Activated CD4-positive, alpha-beta memory T cell treated with anti-CD3 and anti-CD28 coated beads for 36 hours (primary cell): ENCODE measurements at regions of chr17 and their contacts with region 1.

Region 1: GRCh38 chr17:60641810-60642220 is 35.8 kb upstream of the BCAS3 start:
- DNase-seq: peak; percentile 64
- H3K4me3 Mint-ChIP-seq: no peak overlapping the region
- H3K27ac Mint-ChIP-seq: no peak overlapping the region
- H3K4me1 Mint-ChIP-seq: peaks cover 9% of the 10 kb centered on the region
- H3K27me3 Mint-ChIP-seq: no peaks in the 10 kb centered on the region

Region 2: GRCh38 chr17:60142872-60143499 is 498.8 kb before region 1 on chr17:
- CTCF ChIA-PET with region 1: interaction called, 9 read pairs
- POLR2A ChIA-PET with region 1: no interaction called
- intact Hi-C with region 1: loop called (anchors 2 kb)
- DNase-seq: peak; percentile 87
- H3K4me3 Mint-ChIP-seq: peak overlapping the region; percentile 8
- H3K27ac Mint-ChIP-seq: no peak overlapping the region
- H3K4me1 Mint-ChIP-seq: peaks cover 23% of the 10 kb centered on the region
- H3K27me3 Mint-ChIP-seq: peaks cover 85% of the 10 kb centered on the region

Region 3: GRCh38 chr17:60568561-60568960 is 73.3 kb before region 1 on chr17:
- CTCF ChIA-PET with region 1: interaction called, 15 read pairs
- POLR2A ChIA-PET with region 1: no interaction called
- intact Hi-C with region 1: no loop called
- DNase-seq: no peak
- H3K4me3 Mint-ChIP-seq: no peak overlapping the region
- H3K27ac Mint-ChIP-seq: no peak overlapping the region
- H3K4me1 Mint-ChIP-seq: no peaks in the 10 kb centered on the region
- H3K27me3 Mint-ChIP-seq: peaks cover 2% of the 10 kb centered on the region

Region 4: DNA sequence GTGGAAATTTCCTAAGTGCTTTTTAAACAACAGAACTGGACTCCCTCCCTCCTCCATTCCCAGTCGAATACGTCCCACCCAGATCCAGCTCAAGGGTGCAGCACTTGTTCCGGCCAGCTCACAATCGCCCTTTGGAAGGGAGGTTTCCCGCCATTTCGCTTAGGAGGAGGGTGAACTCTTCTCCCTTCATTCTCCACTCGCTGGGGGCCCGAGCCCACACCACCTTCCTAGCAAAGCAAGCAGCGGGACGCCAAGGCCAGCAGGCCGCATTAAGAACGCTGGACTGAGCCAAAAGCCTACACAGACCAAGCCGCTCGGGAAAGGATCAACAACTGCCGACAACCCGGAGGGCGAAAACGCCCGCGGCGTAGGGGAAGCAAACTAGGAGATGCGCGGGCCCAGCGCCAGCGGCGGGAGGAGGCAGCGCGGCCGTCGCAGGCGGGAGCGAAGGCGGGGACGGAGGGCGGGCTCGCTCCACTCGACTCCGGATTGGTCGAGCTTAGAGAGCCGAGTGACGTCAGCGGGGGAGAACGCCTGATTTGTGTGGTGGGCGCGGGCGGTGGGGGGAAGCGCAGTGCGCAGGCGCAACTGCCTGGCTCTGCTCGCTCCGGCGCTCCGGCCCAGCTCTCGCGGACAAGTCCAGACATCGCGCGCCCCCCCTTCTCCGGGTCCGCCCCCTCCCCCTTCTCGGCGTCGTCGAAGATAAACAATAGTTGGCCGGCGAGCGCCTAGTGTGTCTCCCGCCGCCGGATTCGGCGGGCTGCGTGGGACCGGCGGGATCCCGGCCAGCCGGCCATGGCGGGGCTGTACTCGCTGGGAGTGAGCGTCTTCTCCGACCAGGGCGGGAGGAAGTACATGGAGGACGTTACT is 42.0 kb before region 1 on chr17 and contains the start of gene PPM1D:
- CTCF ChIA-PET with region 1: interaction called, 10 read pairs
- POLR2A ChIA-PET with region 1: interaction called, 4 read pairs
- intact Hi-C with region 1: loop called (anchors 1 kb)
- DNase-seq: peak; percentile 99
- H3K4me3 Mint-ChIP-seq: peak within 1 kb of the TSS; percentile 94
- H3K27ac Mint-ChIP-seq: peak within 1 kb of the TSS; percentile 89
- H3K4me1 Mint-ChIP-seq: peaks cover 35% of the 10 kb centered on the region
- H3K27me3 Mint-ChIP-seq: no peaks in the 10 kb centered on the region
- total RNA-seq, gene PPM1D: 9.4 to 10.9 TPM

Region 5: DNA sequence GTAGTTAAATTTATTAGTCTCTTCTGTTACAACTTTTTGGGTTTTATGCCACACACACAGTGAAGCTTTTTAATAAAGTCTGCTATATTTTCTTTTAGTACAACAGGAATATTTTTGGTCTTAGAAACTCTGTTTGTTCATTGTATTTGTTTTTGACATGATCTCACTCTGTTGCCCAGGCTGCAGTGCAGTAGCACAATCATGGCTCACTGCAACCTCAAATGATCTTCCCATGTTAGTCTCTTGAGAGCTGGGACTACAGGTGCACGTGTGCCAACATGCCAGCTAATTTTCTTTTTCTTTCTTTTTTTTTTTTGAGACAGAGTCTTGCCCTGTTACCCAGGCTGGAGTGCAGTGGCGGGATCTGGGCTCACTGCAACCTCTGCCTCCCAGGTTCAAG is 14.7 kb before region 1 on chr17:
- CTCF ChIA-PET with region 1: interaction called, 32 read pairs
- POLR2A ChIA-PET with region 1: no interaction called
- intact Hi-C with region 1: no loop called
- DNase-seq: no peak
- H3K4me3 Mint-ChIP-seq: no peak overlapping the region
- H3K27ac Mint-ChIP-seq: no peak overlapping the region
- H3K4me1 Mint-ChIP-seq: peaks cover 7% of the 10 kb centered on the region
- H3K27me3 Mint-ChIP-seq: no peaks in the 10 kb centered on the region